Natural killer cell (primary cell): ENCODE measurements at regions of chr2 and their contacts with region 1.

Region 1: GRCh38 chr2:218395797-218396687 is 3.6 kb upstream of the CTDSP1 start:
- DNase-seq: peak; percentile 90 to 97
- ATAC-seq: peak; percentile 62 to 82 (median 71)
- H3K4me3 ChIP-seq: peak overlapping the region; percentile 59
- H3K4me3 Mint-ChIP-seq: peak overlapping the region; percentile 94
- H3K27ac ChIP-seq: peak overlapping the region; percentile 83
- H3K27ac Mint-ChIP-seq: peak overlapping the region; percentile 98
- H3K4me1 ChIP-seq: peaks cover 62% of the 10 kb centered on the region
- H3K4me1 Mint-ChIP-seq: peaks cover 39 to 58% of the 10 kb centered on the region in 2 donors
- H3K27me3 ChIP-seq: no peaks in the 10 kb centered on the region
- H3K27me3 Mint-ChIP-seq: no peaks in the 10 kb centered on the region
- CTCF ChIP-seq: peak; percentile 80

Region 2: GRCh38 chr2:218216674-218217359 is 179.2 kb before region 1 on chr2 and contains the start of gene ARPC2:
- intact Hi-C with region 1: loop called (anchors 5 kb)
- DNase-seq: peak; percentile 97 to 98
- ATAC-seq: peak; percentile 81 to 92 (median 87)
- H3K4me3 ChIP-seq: peak within 1 kb of the TSS; percentile 100
- H3K4me3 Mint-ChIP-seq: peak within 1 kb of the TSS; percentile 96
- H3K27ac ChIP-seq: peak within 1 kb of the TSS; percentile 100
- H3K27ac Mint-ChIP-seq: peak within 1 kb of the TSS; percentile 98 to 99
- H3K4me1 ChIP-seq: peaks cover 31% of the 10 kb centered on the region
- H3K4me1 Mint-ChIP-seq: peaks cover 46 to 48% of the 10 kb centered on the region in 2 donors
- H3K27me3 ChIP-seq: no peaks in the 10 kb centered on the region
- H3K27me3 Mint-ChIP-seq: no peaks in the 10 kb centered on the region
- CTCF ChIP-seq: no peak
- total RNA-seq, gene ARPC2: 824 to 880 (median 830) TPM

Region 3: GRCh38 chr2:218301176-218301819 is 94.7 kb before region 1 on chr2:
- intact Hi-C with region 1: loop called (anchors 1 kb)
- DNase-seq: peak; percentile 78 to 94
- ATAC-seq: peak; percentile 97 to 99 (median 98)
- H3K4me3 ChIP-seq: no peak overlapping the region
- H3K4me3 Mint-ChIP-seq: no peak overlapping the region
- H3K27ac ChIP-seq: no peak overlapping the region
- H3K27ac Mint-ChIP-seq: peak overlapping the region; percentile 45 to 51
- H3K4me1 ChIP-seq: peaks cover 7% of the 10 kb centered on the region
- H3K4me1 Mint-ChIP-seq: peaks cover 7% of the 10 kb centered on the region in 2 donors
- H3K27me3 ChIP-seq: no peaks in the 10 kb centered on the region
- H3K27me3 Mint-ChIP-seq: no peaks in the 10 kb centered on the region
- CTCF ChIP-seq: peak; percentile 92

Region 4: DNA sequence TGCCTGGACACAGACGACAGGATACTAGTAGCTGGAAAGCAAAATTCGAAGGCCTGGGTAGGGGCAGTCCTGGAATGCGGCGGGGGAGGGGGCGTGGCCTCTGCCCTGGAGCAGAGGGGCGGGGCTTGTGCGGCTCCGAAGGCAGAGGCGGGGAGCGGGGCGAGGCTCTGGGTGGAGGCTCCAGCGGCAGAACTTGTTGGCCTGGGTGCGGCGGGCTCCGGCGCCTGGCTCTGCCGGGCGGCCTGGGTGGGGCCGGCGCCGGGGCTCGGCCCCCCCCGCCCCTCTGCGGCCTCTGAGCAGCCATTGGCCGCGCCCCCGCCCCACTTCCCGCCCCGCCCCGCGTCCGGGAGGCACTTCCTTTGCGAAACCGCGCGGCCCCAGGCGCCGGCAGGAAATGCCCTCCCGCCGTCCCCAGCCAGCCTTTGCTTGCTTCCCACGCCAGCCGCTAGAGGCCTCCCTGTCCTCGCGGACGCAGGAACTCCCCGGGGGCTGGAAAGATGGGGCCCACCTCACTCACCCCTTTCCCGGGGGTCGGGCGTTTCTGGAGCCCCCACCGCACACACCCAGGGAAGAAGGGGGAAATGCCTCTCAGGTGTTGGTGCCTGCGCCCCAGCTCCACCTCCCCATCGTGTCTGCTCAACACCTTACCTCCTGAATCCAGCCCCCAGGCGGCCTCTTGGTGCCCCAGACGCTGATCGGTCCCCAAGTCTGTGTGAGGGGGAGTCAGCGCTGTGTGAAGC is 10.3 kb after region 1 on chr2:
- intact Hi-C with region 1: loop called (anchors 1 kb)
- DNase-seq: peak; percentile 86 to 94
- ATAC-seq: peak; percentile 72 to 89 (median 86)
- H3K4me3 ChIP-seq: peak overlapping the region; percentile 25
- H3K4me3 Mint-ChIP-seq: peak overlapping the region; percentile 91
- H3K27ac ChIP-seq: peak overlapping the region; percentile 71
- H3K27ac Mint-ChIP-seq: peak overlapping the region; percentile 95 to 96
- H3K4me1 ChIP-seq: peaks cover 66% of the 10 kb centered on the region
- H3K4me1 Mint-ChIP-seq: peaks cover 48 to 70% of the 10 kb centered on the region in 2 donors
- H3K27me3 ChIP-seq: no peaks in the 10 kb centered on the region
- H3K27me3 Mint-ChIP-seq: no peaks in the 10 kb centered on the region
- CTCF ChIP-seq: peak; percentile 61

Region 5: DNA sequence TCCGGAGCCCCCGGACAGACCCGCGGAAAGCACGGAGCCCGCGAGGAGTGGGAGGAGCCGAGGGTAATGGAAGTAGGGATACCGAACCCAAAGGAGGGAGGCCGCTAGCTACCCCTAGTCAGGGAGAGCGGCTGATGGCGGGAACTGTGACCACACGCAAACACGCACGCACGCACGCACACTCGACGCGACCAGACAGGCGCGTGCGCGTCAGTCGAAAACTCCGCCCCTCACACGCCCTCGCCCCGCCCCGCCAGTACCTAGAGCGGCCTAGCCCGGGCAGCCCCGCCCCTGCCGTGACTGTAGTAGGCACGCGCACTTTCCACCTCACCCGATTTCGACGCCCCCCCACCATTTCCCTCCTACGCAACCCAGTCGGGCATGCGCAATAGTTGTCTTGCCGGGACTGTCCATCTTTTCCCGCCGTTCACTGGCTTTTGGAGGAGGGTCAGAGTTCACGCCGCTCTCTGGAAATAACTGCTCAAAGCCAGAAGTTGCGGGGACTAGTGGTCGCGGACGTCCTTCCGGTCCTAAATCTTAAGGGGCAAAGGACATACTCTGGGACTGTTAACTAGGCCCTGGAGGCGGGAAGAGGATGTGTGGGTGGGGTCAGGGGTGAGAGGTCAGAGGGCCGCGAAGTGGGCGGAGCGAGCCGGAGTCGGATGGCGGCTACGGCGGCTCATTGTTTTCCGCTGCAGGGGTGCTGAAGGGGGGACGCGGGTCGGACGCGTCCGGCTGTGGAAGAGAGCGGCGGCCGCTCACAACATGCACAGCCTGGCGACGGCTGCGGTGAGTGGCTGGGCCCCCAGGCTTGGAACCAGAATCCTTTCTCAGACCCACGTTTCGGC is 172.4 kb after region 1 on chr2 and contains the starts of genes CNOT9 and USP37:
- intact Hi-C with region 1: loop called (anchors 2 kb)
- DNase-seq: peak; percentile 99 to 100
- ATAC-seq: peak; percentile 86 to 97 (median 89)
- H3K4me3 ChIP-seq: peak within 1 kb of the TSS; percentile 67
- H3K4me3 Mint-ChIP-seq: peak within 1 kb of the TSS; percentile 99
- H3K27ac ChIP-seq: peak within 1 kb of the TSS; percentile 98
- H3K27ac Mint-ChIP-seq: peak within 1 kb of the TSS; percentile 92 to 95
- H3K4me1 ChIP-seq: peaks cover 27% of the 10 kb centered on the region
- H3K4me1 Mint-ChIP-seq: peaks cover 42 to 67% of the 10 kb centered on the region in 2 donors
- H3K27me3 ChIP-seq: no peaks in the 10 kb centered on the region
- H3K27me3 Mint-ChIP-seq: no peaks in the 10 kb centered on the region
- CTCF ChIP-seq: no peak
- total RNA-seq, gene CNOT9: 61.4 to 66.7 (median 66.3) TPM
- total RNA-seq, gene USP37: 18.3 to 26.2 (median 21.6) TPM

Region 6: DNA sequence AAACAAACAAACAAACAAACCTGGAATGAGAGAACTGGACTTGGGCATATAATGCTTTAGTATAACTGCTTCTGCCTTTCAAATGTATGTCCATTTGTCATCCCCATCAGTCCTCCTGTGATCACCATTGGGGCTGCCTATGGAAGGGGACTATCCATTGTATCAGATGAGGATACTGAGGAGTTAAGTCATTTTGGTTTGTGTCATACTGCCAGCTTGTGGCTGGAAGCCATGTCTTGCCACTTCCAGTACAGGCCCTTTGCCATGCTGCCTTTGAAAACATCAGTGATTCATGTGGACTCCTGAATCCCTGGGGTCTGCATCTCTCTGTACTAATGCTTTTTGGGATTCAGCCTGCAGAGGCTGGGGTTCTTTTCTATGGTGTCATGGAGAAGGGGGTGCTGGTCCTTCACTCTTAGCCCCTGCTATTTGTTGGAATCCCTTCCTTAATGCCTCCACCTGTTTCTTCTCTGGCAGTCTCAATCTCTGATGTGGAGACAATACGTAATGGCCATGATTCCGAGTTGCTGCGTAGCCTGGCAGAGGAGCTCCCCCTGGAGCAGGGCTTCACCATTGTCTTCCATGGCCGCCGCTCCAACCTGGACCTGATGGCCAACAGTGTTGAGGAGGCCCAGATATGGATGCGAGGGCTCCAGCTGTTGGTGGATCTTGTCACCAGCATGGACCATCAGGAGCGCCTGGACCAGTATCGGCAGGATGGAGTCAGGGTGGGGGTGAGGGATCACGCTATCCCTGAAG is 222.2 kb after region 1 on chr2:
- intact Hi-C with region 1: no loop called
- DNase-seq: no peak
- ATAC-seq: no peak
- H3K4me3 ChIP-seq: no peak overlapping the region
- H3K4me3 Mint-ChIP-seq: no peak overlapping the region
- H3K27ac ChIP-seq: no peak overlapping the region
- H3K27ac Mint-ChIP-seq: no peak overlapping the region
- H3K4me1 ChIP-seq: no peaks in the 10 kb centered on the region
- H3K4me1 Mint-ChIP-seq: no peaks in the 10 kb centered on the region
- H3K27me3 ChIP-seq: no peaks in the 10 kb centered on the region
- H3K27me3 Mint-ChIP-seq: no peaks in the 10 kb centered on the region
- CTCF ChIP-seq: no peak